Sciatic nerve (tissue), 2 donors: ENCODE measurements at regions of chr7 and their contacts with region 1.

Region 1: GRCh38 chr7:134420424-134421125 is 38.3 kb downstream of the AKR1B1 start:
- DNase-seq: no peak
- ATAC-seq: peak; percentile 76

Region 2: GRCh38 chr7:133645884-133646391 is 774.6 kb before region 1 on chr7:
- intact Hi-C with region 1: no loop called
- DNase-seq: no peak
- ATAC-seq: no peak

Region 3: GRCh38 chr7:134140889-134141867 is 279.4 kb before region 1 on chr7:
- intact Hi-C with region 1: loop called (anchors 5 kb)
- DNase-seq: peak; percentile 83
- ATAC-seq: peak; percentile 83

Region 4: DNA sequence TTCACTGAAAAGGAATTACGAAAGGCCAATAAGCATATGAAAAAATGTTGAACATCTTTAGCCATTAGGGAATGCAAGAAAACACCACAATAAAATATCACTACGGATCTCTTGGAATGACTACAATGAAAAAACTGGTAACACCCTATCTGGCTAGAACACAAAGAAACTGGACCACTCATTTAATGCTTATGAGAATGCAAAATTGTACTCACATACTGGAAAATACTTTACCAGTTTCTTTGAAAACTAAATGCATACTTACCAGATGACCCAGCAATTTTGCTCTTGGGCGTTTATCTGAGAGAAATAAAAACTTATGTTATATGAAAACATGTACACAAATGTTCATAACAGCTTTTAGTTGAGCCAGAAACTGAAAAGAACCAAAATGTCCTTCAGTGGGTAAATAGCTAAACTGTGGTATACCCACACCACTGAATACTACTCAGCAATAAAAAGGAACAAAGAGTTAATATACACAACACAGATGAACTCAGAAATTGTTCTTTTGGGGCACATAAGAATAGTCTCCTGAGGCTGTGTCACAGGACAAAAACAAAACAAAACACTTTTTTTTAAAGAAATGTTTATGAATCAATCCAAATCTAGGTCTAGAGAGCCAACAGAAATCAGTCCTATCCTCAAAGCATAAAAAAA is 1065.8 kb after region 1 on chr7:
- intact Hi-C with region 1: no loop called
- DNase-seq: no peak
- ATAC-seq: no peak